ENCODE measurements at regions of chr2 and their contacts with region 1.

Region 1: DNA sequence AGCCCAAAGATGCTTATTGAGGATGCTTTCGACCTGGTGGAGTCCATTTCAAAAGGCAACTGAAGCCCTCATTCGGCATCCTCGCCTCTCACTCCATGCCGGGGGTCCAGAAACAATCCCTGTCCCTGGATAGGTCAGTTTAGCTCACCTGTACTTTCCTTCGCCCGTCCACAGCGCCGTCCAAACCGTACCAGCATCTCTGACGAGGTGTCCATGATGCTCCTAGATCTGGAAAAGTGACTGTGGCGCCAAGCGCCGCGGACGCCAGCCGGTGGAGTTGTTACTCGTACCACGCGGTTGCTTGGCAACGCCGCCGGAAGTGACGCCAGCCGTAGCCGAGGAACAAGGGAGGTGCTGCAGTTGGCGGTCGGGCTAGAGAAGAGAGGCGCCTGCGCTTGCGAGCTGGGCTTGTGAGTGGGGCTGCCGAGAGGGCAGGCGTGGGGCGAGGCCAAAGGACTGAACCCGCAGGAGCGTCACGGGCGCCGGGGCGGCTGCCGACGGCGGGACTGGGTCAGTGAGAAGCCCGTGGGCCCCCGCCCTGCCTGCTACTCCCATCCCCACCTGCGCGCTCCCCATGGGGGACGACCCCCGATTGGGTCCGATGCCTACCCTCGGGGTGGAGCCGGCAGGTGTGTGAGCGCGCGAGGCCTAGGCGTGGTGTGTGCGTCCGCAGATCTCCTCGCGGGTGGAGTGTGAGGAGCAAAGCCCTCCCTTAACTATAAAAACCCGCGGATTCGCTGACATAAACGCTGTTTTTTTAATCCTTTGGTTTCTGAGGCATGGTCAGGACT is at the starts of genes CFAP210 and PHOSPHO2:
- DNase-seq: peak; percentile 99 to 100
- ATAC-seq: peak; percentile 99 to 100 (median 100)
- H3K4me3 ChIP-seq: peak within 1 kb of the TSS; percentile 69 to 95 (median 80)
- H3K27ac ChIP-seq: peak within 1 kb of the TSS in 9 of 10 donors; percentile 71 to 89 (median 83)
- H3K4me1 ChIP-seq: peaks cover 0 to 21% (median 5%) of the 10 kb centered on the region in 9 donors
- H3K27me3 ChIP-seq: no peaks in the 10 kb centered on the region
- CTCF ChIP-seq: no peak
- total RNA-seq, gene CFAP210: not detected
- total RNA-seq, gene PHOSPHO2: 1.4 to 4.1 (median 2.2) TPM

Region 2: GRCh38 chr2:169584005-169584877 is 110.1 kb before region 1 on chr2 and contains the start of gene PPIG:
- intact Hi-C with region 1: loop called in 1 of 10 experiments (anchors 10 kb)
- DNase-seq: peak; percentile 88 to 91
- ATAC-seq: peak; percentile 96 to 99 (median 98)
- H3K4me3 ChIP-seq: peak within 1 kb of the TSS; percentile 53 to 95 (median 84)
- H3K27ac ChIP-seq: peak within 1 kb of the TSS; percentile 94 to 99 (median 98)
- H3K4me1 ChIP-seq: peaks cover 5 to 43% (median 25%) of the 10 kb centered on the region in 9 donors
- H3K27me3 ChIP-seq: no peaks in the 10 kb centered on the region
- CTCF ChIP-seq: no peak
- total RNA-seq, gene PPIG: 34.8 to 50.1 (median 40.9) TPM

Region 3: GRCh38 chr2:169705927-169706326 is 11.6 kb after region 1 on chr2:
- intact Hi-C with region 1: no loop called
- DNase-seq: no peak
- ATAC-seq: peak in 3 of 8 donors; percentile 18 to 65 (median 51)
- H3K4me3 ChIP-seq: no peak overlapping the region
- H3K27ac ChIP-seq: no peak overlapping the region
- H3K4me1 ChIP-seq: peaks cover 0 to 4% (median 0%) of the 10 kb centered on the region in 9 donors
- H3K27me3 ChIP-seq: no peaks in the 10 kb centered on the region
- CTCF ChIP-seq: no peak

Region 4: GRCh38 chr2:169734169-169734847 is 40.0 kb after region 1 on chr2:
- intact Hi-C with region 1: loop called in 2 of 10 experiments (anchors 5 kb)
- DNase-seq: peak in 1 of 2 donors; percentile 23
- ATAC-seq: peak in 5 of 8 donors; percentile 8 to 38 (median 24)
- H3K4me3 ChIP-seq: peak overlapping the region; percentile 30 to 73 (median 68)
- H3K27ac ChIP-seq: peak overlapping the region in 7 of 10 donors; percentile 18 to 65 (median 60)
- H3K4me1 ChIP-seq: peaks cover 0 to 14% (median 0%) of the 10 kb centered on the region in 9 donors
- H3K27me3 ChIP-seq: peaks cover 0 to 13% (median 0%) of the 10 kb centered on the region in 7 donors
- CTCF ChIP-seq: no peak

Region 5: DNA sequence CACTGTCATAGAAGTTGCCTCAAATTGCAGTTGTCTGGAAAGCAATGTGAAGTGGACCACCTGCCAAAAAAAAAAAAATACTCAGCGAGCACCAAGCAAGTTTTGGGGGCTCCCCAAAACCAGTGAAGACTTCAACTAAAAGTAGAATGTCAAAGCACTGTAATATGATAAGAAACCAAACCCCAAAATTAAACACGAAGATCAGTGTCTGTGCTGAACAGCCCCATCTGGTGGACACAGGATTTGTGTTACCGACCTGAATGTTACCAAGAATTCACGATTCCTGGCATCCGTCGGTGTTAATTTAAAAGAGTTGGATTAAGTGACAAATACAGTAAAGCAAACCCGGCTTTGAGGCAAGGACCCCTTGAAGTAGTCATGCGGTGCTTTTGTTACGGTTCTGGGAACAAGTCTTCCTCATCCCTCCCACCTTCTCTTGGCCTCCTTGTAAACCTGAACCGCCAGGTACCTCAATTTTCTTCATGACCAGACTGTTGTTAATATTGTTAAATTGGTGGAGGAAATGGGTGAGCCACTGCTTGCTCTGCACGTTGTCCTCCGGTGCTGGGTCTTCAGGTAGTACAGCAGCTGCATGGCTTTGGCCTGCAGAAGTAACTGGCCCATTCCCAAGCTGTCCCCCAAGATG is 73.1 kb after region 1 on chr2:
- intact Hi-C with region 1: no loop called
- DNase-seq: peak in 1 of 2 donors; percentile 60
- ATAC-seq: peak in 7 of 8 donors; percentile 40 to 73 (median 50)
- H3K4me3 ChIP-seq: no peak overlapping the region
- H3K27ac ChIP-seq: no peak overlapping the region
- H3K4me1 ChIP-seq: peaks cover 0 to 21% (median 10%) of the 10 kb centered on the region in 9 donors
- H3K27me3 ChIP-seq: peaks cover 0 to 31% (median 20%) of the 10 kb centered on the region in 7 donors
- CTCF ChIP-seq: peak; percentile 23 to 79 (median 74)